OCI-LY7 (cell line): ENCODE measurements at regions of chr5 and their contacts with region 1.

Region 1: GRCh38 chr5:158639881-158640592 is 459.7 kb downstream of the EBF1 start:
- DNase-seq: no peak
- H3K4me3 ChIP-seq: no peak overlapping the region
- H3K27ac ChIP-seq: no peak overlapping the region
- H3K4me1 ChIP-seq: peaks cover 10% of the 10 kb centered on the region
- CTCF ChIP-seq: no peak

Region 2: DNA sequence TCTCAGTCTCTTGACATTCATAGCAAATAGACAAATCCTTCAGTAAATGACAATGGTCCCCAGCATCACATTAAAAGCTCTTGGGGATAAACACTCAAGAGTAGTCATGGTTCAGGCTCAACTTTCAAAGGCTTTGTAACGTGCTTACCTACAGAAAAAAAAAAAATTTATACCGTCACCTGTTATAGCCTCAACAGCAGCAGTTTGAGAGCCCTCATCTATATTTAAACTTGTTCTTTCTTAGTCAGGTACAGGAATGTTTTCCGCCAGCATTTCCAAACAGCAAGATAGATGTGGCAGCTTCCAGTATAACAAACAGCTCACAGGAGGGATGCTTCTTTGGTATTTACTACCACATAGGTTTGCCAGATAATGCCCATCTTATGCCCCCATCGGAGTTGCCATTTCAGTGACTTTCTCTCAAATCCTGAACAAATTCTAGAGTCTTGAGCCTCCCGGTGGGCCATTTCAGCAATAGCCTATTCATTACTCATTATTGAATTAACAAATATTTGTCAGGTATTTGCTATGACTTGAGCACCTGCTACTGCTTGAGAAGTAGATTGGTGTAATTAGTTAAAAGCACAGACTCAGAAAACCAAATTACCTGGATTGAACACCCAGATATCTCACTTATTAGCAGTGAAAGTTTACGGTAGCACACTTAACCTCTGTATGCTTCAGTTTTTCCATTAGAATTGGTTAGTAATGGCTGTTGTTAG is 10.3 kb before region 1 on chr5:
- CTCF ChIA-PET with region 1: no interaction called
- POLR2A ChIA-PET with region 1: interaction called, 14 read pairs
- intact Hi-C with region 1: no loop called
- DNase-seq: no peak
- H3K4me3 ChIP-seq: no peak overlapping the region
- H3K27ac ChIP-seq: no peak overlapping the region
- H3K4me1 ChIP-seq: no peaks in the 10 kb centered on the region
- CTCF ChIP-seq: no peak